ENCODE measurements at regions of chr7 and their contacts with region 1.

Region 1: GRCh38 chr7:135584362-135585353 is 26.9 kb downstream of the NUP205 start:
- DNase-seq: no peak

Region 2: DNA sequence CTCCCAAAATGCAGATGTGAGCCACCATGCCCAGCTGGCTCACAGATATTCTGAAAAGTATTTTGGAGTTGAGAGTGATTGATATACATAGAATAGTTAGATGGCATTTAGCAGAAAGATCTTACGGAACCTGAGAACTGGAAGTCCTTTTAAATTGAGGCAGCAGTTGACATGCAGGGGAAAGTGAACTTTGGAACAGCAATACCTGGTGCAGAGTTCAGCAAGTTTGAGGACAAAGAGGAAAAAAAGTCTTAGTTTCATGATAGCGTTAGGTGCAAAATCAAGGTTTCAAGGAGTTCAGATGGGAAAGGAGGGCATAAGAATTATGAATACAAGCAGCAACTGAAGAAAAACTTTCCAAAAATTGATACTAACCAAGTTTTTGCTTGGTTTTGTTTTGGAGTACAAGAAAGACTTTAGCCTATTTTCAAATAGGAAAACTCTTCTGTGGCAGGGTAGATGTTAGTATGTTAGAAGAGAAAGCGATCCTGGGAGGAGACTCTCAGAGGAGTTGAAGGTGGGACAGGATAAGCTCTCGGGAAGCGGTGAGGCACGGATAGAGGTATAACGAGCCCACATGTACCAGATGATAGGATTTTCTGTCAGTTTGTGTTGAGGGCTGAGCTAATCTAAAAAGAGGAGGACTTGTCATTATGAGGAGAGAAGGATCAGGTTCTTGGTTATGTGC is 49.7 kb after region 1 on chr7:
- in situ Hi-C with region 1: loop called (anchors 10 kb)
- DNase-seq: no peak

Measured in G401 (cell line).